ENCODE measurements at regions of chr3 and their contacts with region 1.

Region 1: GRCh38 chr3:129068291-129068886 is 7.8 kb downstream of the GP9 start:
- DNase-seq: no peak
- H3K4me3 ChIP-seq: no peak overlapping the region
- H3K27ac ChIP-seq: no peak overlapping the region
- H3K4me1 ChIP-seq: no peaks in the 10 kb centered on the region
- H3K27me3 ChIP-seq: peaks cover 3% of the 10 kb centered on the region; the same call in 1 of the 2 replicates
- CTCF ChIP-seq: no peak

Region 2: DNA sequence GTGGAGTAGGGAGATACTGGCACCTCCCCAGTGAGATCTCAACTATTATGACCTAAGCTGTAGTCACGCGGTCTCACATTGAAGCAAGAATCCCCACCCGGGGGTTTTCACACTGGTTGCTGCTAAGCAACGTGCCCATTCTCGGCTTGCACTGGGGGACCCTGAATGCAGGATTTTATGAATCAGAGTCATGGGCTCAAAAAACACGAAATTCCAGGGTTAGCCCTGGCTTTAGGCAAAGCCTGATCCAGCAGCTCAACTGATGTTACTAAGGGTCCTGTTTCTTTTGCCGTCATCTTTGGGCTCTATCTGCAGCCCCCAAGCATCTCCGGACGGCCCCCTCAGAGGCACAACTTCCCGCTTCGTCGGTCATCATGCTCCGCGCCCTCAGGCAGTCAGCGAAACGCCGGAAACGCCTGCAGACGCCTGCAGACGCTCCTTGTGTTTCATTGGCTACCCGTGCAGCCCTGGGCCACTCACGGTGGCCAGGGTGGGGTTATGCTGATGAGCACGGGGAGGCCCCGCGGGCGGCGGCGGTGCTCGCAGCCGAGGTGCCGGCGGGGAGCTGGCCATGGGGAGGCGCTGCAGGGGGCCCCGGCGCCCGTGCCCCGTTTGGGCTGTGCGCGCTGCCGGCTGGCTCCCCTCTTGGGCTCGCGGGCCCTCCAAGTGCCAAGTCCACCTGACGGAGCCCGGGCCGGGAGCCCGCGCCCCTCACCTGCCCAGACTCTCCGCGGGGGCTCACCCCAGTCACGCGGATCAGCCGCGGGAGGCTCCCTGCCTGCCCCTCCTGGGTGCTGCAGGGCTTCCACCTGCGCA is 41.5 kb before region 1 on chr3:
- CTCF ChIA-PET with region 1: interaction called, 13 read pairs
- POLR2A ChIA-PET with region 1: no interaction called
- intact Hi-C with region 1: no loop called
- DNase-seq: peak; percentile 84 to 94
- H3K4me3 ChIP-seq: peak overlapping the region; percentile 50; the same call in 1 of the 2 replicates
- H3K27ac ChIP-seq: no peak overlapping the region
- H3K4me1 ChIP-seq: 0 out of 2 replicates have a peak, but pooled peaks cover 4% of the 10 kb centered on the region
- H3K27me3 ChIP-seq: no peaks in the 10 kb centered on the region
- CTCF ChIP-seq: peak; percentile 66

Region 3: DNA sequence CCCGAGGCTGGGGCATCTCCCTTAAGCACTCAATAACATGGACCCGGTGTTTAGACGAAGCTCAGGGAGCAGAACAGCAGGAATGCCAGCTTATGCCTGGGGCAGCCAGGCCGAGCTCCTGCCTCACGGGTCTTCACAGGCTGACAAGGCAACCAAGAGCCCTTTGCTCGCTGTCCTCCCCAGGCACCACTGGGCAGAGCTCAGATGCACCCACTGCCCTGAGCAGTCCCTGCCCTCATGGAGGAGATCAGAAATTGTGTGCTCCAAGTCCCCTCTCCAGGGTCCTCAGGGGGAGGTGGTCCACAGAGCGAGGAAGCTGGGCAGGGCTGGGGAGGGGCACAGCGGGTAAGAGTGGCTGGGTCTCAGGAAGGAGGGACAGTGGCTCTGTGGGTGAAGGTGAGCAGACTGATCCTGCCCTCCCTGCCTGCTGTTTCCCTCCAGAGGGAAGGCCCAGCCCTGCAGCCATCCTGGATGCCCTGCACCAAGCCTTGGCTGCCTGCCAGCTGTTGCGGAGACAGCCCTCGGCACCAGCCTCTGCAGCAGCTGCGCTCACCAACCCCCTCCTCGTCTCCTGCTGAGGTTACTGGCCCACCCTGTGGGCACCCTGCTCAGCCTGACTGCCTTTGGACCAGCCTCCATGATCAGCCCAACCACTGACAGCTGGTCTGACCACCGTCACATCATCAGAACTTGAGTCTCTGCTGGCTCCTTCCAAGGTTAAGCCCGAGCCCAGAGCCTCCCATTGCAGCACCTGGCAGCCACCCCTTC is 28.9 kb before region 1 on chr3:
- CTCF ChIA-PET with region 1: no interaction called
- POLR2A ChIA-PET with region 1: interaction called, 13 read pairs
- intact Hi-C with region 1: no loop called
- DNase-seq: peak in 1 of 2 experiments; percentile 48
- H3K4me3 ChIP-seq: no peak overlapping the region
- H3K27ac ChIP-seq: no peak overlapping the region
- H3K4me1 ChIP-seq: no peaks in the 10 kb centered on the region
- H3K27me3 ChIP-seq: peaks cover 17% of the 10 kb centered on the region; the same call in 1 of the 2 replicates
- CTCF ChIP-seq: no peak

Region 4: GRCh38 chr3:129224984-129225393 is 156.6 kb after region 1 on chr3:
- CTCF ChIA-PET with region 1: no interaction called
- POLR2A ChIA-PET with region 1: no interaction called
- intact Hi-C with region 1: no loop called
- DNase-seq: peak; percentile 74 to 88
- H3K4me3 ChIP-seq: peak overlapping the region; percentile 31
- H3K27ac ChIP-seq: peak overlapping the region; percentile 88
- H3K4me1 ChIP-seq: peaks cover 52% of the 10 kb centered on the region
- H3K27me3 ChIP-seq: no peaks in the 10 kb centered on the region
- CTCF ChIP-seq: no peak

Measured in PC-9 (cell line).